ENCODE measurements at regions of chr16 and their contacts with region 1.

Region 1: GRCh38 chr16:90081606-90081970 is 4.5 kb upstream of the PRDM7 start:
- DNase-seq: no peak
- H3K4me3 ChIP-seq: peak overlapping the region in 1 of 2 experiments; percentile 67; a peak in 1 of 4 replicates
- H3K27ac ChIP-seq: no peak overlapping the region
- H3K4me1 ChIP-seq: peaks cover 5 to 17% of the 10 kb centered on the region in 2 experiments; a peak in 3 of 4 replicates
- H3K27me3 ChIP-seq: no peaks in the 10 kb centered on the region; the same call in 1 of the 2 replicates
- CTCF ChIP-seq: no peak
- EP300 ChIP-seq: no peak
- RAD21 ChIP-seq: no peak

Region 2: GRCh38 chr16:90046971-90047713 is 34.4 kb before region 1 on chr16:
- CTCF ChIA-PET with region 1: interaction called, 15 read pairs
- POLR2A ChIA-PET with region 1: no interaction called
- DNase-seq: no peak
- H3K4me3 ChIP-seq: peak overlapping the region; percentile 48 to 55; a peak in 3 of 4 replicates
- H3K27ac ChIP-seq: peak overlapping the region in 1 of 2 experiments; percentile 68; a peak in 1 of 4 replicates
- H3K4me1 ChIP-seq: peaks cover 12 to 17% of the 10 kb centered on the region in 2 experiments; a peak in 3 of 4 replicates
- H3K27me3 ChIP-seq: no peaks in the 10 kb centered on the region
- CTCF ChIP-seq: no peak
- EP300 ChIP-seq: no peak
- RAD21 ChIP-seq: no peak

Region 3: DNA sequence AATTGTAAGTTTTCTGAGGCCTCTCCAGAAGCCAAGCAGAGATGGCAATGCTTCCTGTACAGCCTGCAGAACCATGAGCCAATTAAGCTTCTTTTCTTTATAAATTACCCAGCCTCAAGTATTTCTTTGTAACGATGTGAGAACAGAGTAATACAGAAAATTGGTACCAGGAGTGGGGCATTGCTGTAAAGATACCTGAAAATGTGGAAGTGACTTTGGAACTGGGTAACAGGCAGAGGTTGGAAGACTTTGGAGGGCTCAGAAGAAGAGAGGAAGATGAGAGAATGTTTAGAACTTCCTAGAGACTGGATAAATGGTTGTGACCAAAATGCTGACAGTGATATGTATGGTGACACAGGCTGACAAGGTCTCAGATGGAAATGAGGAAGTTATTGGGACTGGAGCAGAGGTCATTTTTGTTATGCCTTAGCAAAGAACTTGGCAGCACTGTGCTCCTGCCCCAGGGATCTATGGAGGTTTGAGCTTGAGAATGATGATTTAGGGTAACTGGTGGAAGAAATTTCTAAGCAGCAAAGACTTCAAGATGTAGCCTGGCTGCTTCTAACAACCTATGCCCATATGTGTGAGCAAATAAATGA is 27.6 kb before region 1 on chr16:
- CTCF ChIA-PET with region 1: interaction called, 16 read pairs
- POLR2A ChIA-PET with region 1: no interaction called
- DNase-seq: no peak
- H3K4me3 ChIP-seq: no peak overlapping the region
- H3K27ac ChIP-seq: no peak overlapping the region
- H3K4me1 ChIP-seq: no peaks in the 10 kb centered on the region
- H3K27me3 ChIP-seq: no peaks in the 10 kb centered on the region
- CTCF ChIP-seq: no peak
- EP300 ChIP-seq: no peak
- RAD21 ChIP-seq: no peak

Region 4: DNA sequence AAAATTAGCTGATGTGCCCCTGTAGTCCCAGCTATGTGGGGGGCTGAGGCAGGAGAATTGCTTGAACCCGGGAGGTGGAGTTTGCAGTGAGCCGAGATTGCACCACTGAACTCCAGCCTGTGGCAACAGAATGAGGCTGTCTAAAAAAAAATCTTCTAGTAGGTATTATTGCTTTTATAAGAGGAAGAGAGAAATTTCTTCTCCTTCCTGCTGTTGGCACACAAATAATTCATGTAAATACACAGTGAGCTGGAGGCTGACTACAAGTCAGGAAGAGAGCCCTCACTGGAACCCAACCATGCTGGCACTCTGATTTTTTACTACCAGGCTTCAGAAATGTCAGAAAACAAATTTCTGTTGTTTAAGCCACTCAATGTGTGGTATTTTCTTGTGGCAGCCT is 11.1 kb before region 1 on chr16:
- CTCF ChIA-PET with region 1: interaction called, 13 read pairs
- POLR2A ChIA-PET with region 1: no interaction called
- DNase-seq: no peak
- H3K4me3 ChIP-seq: no peak overlapping the region
- H3K27ac ChIP-seq: no peak overlapping the region
- H3K4me1 ChIP-seq: no peaks in the 10 kb centered on the region
- H3K27me3 ChIP-seq: peaks cover 5% of the 10 kb centered on the region; the same call in 1 of the 2 replicates
- CTCF ChIP-seq: no peak
- EP300 ChIP-seq: no peak
- RAD21 ChIP-seq: no peak

Measured in SK-N-SH (cell line).